PC-3 (cell line): ENCODE measurements at regions of chr2 and their contacts with region 1.

Region 1: GRCh38 chr2:173402405-173402974 is 47.8 kb downstream of the CDCA7 start:
- DNase-seq: peak; percentile 92
- ATAC-seq: peak; percentile 93
- H3K4me3 ChIP-seq: peak overlapping the region; percentile 74
- H3K27ac ChIP-seq: no peak overlapping the region
- H3K4me1 ChIP-seq: peaks cover 16% of the 10 kb centered on the region
- H3K27me3 ChIP-seq: no peaks in the 10 kb centered on the region
- CTCF ChIP-seq: peak; percentile 93

Region 2: GRCh38 chr2:173027181-173028128 is 375.0 kb before region 1 on chr2:
- CTCF ChIA-PET with region 1: interaction called, 4 read pairs
- POLR2A ChIA-PET with region 1: no interaction called
- intact Hi-C with region 1: loop called (anchors 2 kb)
- DNase-seq: peak; percentile 93
- ATAC-seq: peak; percentile 88
- H3K4me3 ChIP-seq: no peak overlapping the region
- H3K27ac ChIP-seq: no peak overlapping the region
- H3K4me1 ChIP-seq: peaks cover 4% of the 10 kb centered on the region
- H3K27me3 ChIP-seq: no peaks in the 10 kb centered on the region
- CTCF ChIP-seq: peak; percentile 96

Region 3: DNA sequence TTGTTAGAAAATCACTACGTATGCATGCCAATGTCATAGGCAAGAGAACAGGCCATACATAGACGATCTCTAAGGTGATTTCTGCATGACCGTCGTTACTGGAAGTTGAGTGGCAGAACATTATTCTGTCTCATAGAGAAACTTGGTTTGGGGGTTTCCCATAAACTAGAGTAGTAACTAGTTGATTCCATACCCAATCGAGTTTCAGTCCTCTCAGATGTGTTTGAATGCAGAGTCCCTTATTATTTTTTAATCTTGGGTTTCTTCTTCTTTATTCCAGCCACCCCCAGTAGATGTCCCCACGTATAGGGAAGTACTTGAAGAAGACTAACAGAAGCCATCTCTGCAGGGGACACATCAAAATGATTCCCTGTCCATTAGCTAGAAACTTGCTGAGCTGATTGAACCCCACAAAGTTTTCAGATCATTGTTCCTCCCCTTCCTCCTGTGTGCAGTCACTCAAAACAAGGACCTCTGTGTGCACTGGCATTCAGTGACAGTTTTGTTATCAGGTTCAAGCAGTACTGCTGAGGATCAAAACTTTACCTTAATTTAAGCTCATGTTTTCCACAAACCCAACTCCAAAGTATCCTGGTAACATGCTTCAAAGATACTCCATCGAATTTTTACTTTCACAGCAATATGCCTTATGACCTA is 116.2 kb before region 1 on chr2:
- CTCF ChIA-PET with region 1: interaction called, 3 read pairs
- POLR2A ChIA-PET with region 1: no interaction called
- intact Hi-C with region 1: loop called (anchors 5 kb)
- DNase-seq: peak; percentile 9
- ATAC-seq: peak; percentile 42; the same call in 1 of the 2 replicates
- H3K4me3 ChIP-seq: no peak overlapping the region
- H3K27ac ChIP-seq: no peak overlapping the region
- H3K4me1 ChIP-seq: peaks cover 5% of the 10 kb centered on the region; the same call in 1 of the 2 replicates
- H3K27me3 ChIP-seq: no peaks in the 10 kb centered on the region
- CTCF ChIP-seq: peak; percentile 42; the same call in 1 of the 2 replicates

Region 4: DNA sequence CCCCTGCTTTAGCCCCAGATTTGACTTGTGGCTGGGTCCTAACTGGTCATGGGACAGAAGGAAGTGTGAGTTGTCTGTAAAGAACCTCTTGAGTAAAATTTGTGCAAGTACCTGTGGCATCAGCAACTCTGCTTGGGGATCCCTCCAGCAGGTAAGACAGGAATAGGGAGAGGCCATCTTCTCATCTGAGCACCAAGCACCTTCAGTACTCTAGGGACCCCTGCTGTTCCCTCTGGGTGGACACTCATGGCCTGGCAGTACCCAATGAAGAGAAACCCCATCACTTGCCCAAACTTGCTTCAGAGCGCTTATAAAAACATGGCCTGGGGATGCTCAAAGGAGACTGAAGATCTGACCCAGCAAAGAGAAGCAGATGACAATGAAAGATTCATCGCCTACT is 264.9 kb after region 1 on chr2:
- CTCF ChIA-PET with region 1: no interaction called
- POLR2A ChIA-PET with region 1: no interaction called
- intact Hi-C with region 1: loop called (anchors 5 kb)
- DNase-seq: peak; percentile 39
- ATAC-seq: peak; percentile 67
- H3K4me3 ChIP-seq: no peak overlapping the region
- H3K27ac ChIP-seq: no peak overlapping the region
- H3K4me1 ChIP-seq: peaks cover 13% of the 10 kb centered on the region
- H3K27me3 ChIP-seq: no peaks in the 10 kb centered on the region
- CTCF ChIP-seq: peak; percentile 57

Region 5: DNA sequence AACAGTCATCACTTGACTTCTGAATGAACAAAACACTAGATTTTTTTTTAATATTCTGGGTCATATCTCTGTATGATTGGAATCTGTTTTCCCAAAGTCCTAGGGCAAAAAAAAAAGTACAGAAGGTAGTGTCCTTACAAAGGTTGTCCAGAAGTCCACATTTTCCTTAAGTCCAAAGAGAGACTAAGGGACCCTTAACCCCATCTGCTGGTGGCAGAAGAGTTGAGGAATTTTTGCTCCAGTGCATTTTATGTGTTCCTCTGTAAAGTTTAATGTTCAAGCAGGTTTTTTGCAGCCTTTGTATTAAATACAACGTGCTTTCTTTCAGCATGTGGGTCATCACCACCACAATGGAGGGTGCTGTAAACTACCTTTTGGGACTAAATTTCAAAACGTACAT is 346.8 kb after region 1 on chr2:
- CTCF ChIA-PET with region 1: no interaction called
- POLR2A ChIA-PET with region 1: no interaction called
- intact Hi-C with region 1: loop called (anchors 1 kb)
- DNase-seq: peak; percentile 74
- ATAC-seq: peak; percentile 64
- H3K4me3 ChIP-seq: no peak overlapping the region
- H3K27ac ChIP-seq: no peak overlapping the region
- H3K4me1 ChIP-seq: no peaks in the 10 kb centered on the region
- H3K27me3 ChIP-seq: no peaks in the 10 kb centered on the region
- CTCF ChIP-seq: peak; percentile 74